ENCODE measurements at regions of chr12 and their contacts with region 1.

Region 1: DNA sequence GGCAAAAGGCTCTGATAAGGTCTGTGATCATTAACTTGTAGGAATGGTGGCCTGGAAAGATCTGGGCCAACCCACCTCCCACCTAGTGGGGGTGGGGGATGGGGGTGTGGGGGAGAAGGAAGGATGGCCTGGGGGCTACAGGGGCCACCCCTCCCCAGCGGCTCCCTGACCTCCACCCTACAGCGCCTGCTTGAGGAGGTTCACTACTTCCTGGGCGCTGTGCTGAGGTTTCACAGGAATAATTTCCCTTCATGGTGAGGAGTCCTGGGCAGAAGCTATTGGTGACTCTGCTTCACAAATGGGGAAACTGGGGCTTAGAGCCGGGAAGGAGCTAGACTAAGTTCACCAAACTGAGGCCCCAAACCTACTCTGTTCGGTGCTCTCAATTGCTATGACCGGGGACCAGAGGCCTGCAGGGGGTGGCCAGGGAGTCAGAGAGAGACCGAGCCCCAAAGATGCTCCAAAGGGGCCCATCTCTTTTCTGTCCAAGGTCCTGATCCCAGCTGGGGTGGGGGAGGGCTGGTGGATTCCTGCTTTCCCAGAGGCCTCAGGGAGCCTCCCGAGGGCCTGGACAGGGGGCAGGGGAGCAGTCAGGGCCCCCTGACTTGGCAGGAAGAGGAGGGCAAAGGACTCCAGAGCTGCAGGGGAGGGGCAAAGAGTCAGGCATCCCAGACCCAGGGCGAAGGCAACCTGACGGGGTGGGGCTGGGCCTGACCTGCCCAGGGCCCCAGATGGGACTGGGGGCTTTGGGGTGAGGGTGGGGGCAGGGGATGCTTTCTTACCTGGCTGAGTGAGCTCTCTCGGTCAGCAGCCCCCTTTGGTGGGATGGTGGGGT is 1.7 kb downstream of the HNF1A start:
- DNase-seq: no peak
- H3K4me3 ChIP-seq: no peak overlapping the region
- H3K27ac ChIP-seq: no peak overlapping the region
- H3K4me1 ChIP-seq: no peaks in the 10 kb centered on the region
- H3K27me3 ChIP-seq: no peaks in the 10 kb centered on the region
- CTCF ChIP-seq: no peak
- POLR2A ChIP-seq: no peak

Region 2: GRCh38 chr12:120961604-120962531 is 18.2 kb before region 1 on chr12:
- CTCF ChIA-PET with region 1: no interaction called
- POLR2A ChIA-PET with region 1: no interaction called
- dilution Hi-C with region 1: no loop called
- intact Hi-C with region 1: loop called (anchors 2 kb)
- DNase-seq: no peak
- H3K4me3 ChIP-seq: no peak overlapping the region
- H3K27ac ChIP-seq: no peak overlapping the region
- H3K4me1 ChIP-seq: no peaks in the 10 kb centered on the region
- H3K27me3 ChIP-seq: no peaks in the 10 kb centered on the region
- CTCF ChIP-seq: no peak
- POLR2A ChIP-seq: no peak

Measured in endothelial cell of umbilical vein (primary cell).